Esophagus muscularis mucosa (tissue), 4 donors: ENCODE measurements at regions of chr1 and their contacts with region 1.

Region 1: GRCh38 chr1:197180252-197180878 is 33.9 kb upstream of the ASPM start:
- DNase-seq: no peak
- H3K4me3 ChIP-seq: no peak overlapping the region
- H3K27ac ChIP-seq: no peak overlapping the region
- H3K4me1 ChIP-seq: peaks cover 0 to 12% (median 2%) of the 10 kb centered on the region in 4 donors
- H3K27me3 ChIP-seq: no peaks in the 10 kb centered on the region
- CTCF ChIP-seq: peak; percentile 24 to 60 (median 54)
- EP300 ChIP-seq: no peak
- POLR2A ChIP-seq: no peak

Region 2: DNA sequence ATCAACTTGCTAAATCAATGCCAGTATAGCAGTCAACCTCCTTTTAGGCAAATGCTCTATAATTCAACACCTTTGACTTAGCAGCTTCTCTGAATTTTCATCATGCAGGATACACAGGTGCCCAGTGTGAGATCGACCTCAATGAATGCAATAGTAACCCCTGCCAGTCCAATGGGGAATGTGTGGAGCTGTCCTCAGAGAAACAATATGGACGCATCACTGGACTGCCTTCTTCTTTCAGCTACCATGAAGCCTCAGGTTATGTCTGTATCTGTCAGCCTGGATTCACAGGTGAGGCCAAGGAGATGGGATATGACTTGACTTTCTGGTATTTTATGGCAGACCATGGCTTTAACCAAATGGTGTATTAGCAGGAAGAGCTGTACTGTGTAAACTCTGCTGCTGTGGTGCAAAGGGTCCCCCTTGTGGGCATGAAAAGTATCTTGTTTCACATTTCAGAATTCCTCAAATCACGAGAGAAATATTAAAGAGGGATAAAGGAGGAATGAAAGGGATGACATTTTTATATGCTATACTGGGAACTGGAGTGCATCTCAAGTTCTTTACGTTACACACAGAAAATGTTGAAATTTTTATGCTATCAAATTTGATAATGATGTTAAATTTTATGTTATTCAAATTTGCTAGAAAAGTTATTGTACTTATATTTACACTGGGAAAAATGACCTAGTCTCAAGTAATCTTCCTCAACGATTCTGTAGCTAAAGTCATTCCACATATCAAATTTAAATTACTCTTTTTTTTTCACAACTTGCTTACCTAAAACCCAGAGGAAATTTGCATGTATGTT is 176.6 kb after region 1 on chr1:
- intact Hi-C with region 1: loop called (anchors 10 kb)
- DNase-seq: no peak
- H3K4me3 ChIP-seq: no peak overlapping the region
- H3K27ac ChIP-seq: no peak overlapping the region
- H3K4me1 ChIP-seq: no peaks in the 10 kb centered on the region
- H3K27me3 ChIP-seq: no peaks in the 10 kb centered on the region
- CTCF ChIP-seq: peak; percentile 36 to 52 (median 44)
- EP300 ChIP-seq: no peak
- POLR2A ChIP-seq: no peak